MCF 10A (cell line): ENCODE measurements at regions of chr17 and their contacts with region 1.

Region 1: DNA sequence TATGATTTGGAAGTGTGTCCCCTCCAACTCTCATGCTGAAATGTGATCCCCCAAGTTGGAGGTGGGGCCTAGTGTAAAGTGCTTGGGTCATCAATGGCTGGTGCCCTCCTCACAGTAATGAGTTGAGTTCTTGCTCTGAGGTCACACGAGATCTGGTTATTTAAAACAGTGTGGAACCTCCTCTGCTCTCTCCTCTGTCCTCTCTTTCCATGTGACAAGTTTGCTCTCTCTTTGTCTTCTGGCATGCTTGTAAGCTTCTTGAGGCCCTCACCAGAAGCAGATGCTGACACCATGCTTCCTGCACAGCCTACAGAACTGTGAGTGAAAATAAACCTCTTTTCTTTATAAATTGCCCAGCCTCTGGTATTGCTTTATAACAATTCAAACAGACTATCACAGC is 19.9 kb downstream of the BRIP1 start:
- DNase-seq: no peak
- H3K4me3 Mint-ChIP-seq: no peak overlapping the region
- H3K27ac Mint-ChIP-seq: no peak overlapping the region
- H3K4me1 Mint-ChIP-seq: no peaks in the 10 kb centered on the region
- H3K27me3 Mint-ChIP-seq: no peaks in the 10 kb centered on the region
- CTCF ChIP-seq: no peak

Region 2: GRCh38 chr17:61635913-61636432 is 207.5 kb before region 1 on chr17:
- CTCF ChIA-PET with region 1: interaction called, 28 read pairs
- POLR2A ChIA-PET with region 1: interaction called, 3 read pairs
- intact Hi-C with region 1: no loop called
- DNase-seq: peak; percentile 75
- H3K4me3 Mint-ChIP-seq: no peak overlapping the region
- H3K27ac Mint-ChIP-seq: no peak overlapping the region
- H3K4me1 Mint-ChIP-seq: no peaks in the 10 kb centered on the region
- H3K27me3 Mint-ChIP-seq: no peaks in the 10 kb centered on the region
- CTCF ChIP-seq: peak; percentile 80